ENCODE measurements at regions of chr14 and their contacts with region 1.

Region 1: DNA sequence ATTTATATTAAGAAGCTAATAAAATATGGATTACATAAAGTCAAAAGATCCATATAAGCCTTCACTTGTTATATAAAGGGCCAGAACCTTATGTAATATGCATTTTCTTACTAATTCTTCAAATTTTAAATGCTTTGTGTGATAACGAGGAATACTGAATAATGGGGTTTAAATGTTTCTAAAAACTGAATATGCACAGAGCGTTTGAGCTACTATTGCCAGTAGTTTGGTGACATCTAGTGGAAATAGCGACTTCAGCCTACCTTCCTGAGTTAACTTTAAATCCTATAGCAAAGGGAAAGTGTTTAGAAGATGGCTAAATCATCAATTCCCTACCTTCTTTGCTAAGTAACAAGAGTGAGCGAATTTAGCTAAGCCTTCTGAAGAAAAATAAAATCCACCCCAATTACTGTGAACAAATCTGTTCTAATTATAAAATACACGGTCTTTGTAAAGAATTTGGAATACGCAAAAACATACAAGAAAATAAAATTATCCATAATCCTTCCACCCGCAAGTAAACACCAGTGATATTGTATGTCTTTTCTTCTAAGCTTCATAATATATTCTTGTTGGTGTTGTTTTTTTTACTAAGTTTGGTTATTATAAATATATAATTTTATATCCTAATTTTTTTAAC is 115.5 kb upstream of the G2E3 start:
- DNase-seq: no peak
- H3K4me3 Mint-ChIP-seq: no peak overlapping the region
- H3K27ac Mint-ChIP-seq: no peak overlapping the region
- H3K4me1 Mint-ChIP-seq: no peaks in the 10 kb centered on the region
- H3K27me3 Mint-ChIP-seq: no peaks in the 10 kb centered on the region

Region 2: GRCh38 chr14:29548948-29549370 is 894.5 kb before region 1 on chr14:
- intact Hi-C with region 1: loop called (anchors 2 kb)
- DNase-seq: no peak
- H3K4me3 Mint-ChIP-seq: no peak overlapping the region
- H3K27ac Mint-ChIP-seq: no peak overlapping the region
- H3K4me1 Mint-ChIP-seq: no peaks in the 10 kb centered on the region
- H3K27me3 Mint-ChIP-seq: no peaks in the 10 kb centered on the region

Region 3: GRCh38 chr14:30180219-30180618 is 263.3 kb before region 1 on chr14:
- intact Hi-C with region 1: no loop called
- DNase-seq: no peak
- H3K4me3 Mint-ChIP-seq: no peak overlapping the region
- H3K27ac Mint-ChIP-seq: no peak overlapping the region
- H3K4me1 Mint-ChIP-seq: no peaks in the 10 kb centered on the region
- H3K27me3 Mint-ChIP-seq: no peaks in the 10 kb centered on the region

Region 4: GRCh38 chr14:30375296-30375892 is 68.1 kb before region 1 on chr14:
- intact Hi-C with region 1: loop called (anchors 5 kb)
- DNase-seq: peak; percentile 87
- H3K4me3 Mint-ChIP-seq: no peak overlapping the region
- H3K27ac Mint-ChIP-seq: no peak overlapping the region
- H3K4me1 Mint-ChIP-seq: peaks cover 2% of the 10 kb centered on the region
- H3K27me3 Mint-ChIP-seq: peaks cover 11% of the 10 kb centered on the region

Measured in activated CD4-positive, alpha-beta T cell treated with anti-CD3 and anti-CD28 coated beads, Interleukin-2, amount 10 ng/mL, durations not matched to agents 24 days and 14 days (primary cell).